CD4-positive, alpha-beta memory T cell (primary cell): ENCODE measurements at regions of chr14 and their contacts with region 1.

Region 1: GRCh38 chr14:61321385-61322010 is at the start of gene PRKCH:
- DNase-seq: peak; percentile 84 to 91 (median 85)
- H3K4me3 ChIP-seq: peak within 1 kb of the TSS; percentile 85 to 95
- H3K4me3 Mint-ChIP-seq: peak within 1 kb of the TSS; percentile 98 to 100 (median 99)
- H3K27ac ChIP-seq: peak within 1 kb of the TSS; percentile 89
- H3K27ac Mint-ChIP-seq: peak within 1 kb of the TSS in 6 of 7 donors; percentile 94 to 99 (median 97)
- H3K4me1 ChIP-seq: peaks cover 26% of the 10 kb centered on the region
- H3K4me1 Mint-ChIP-seq: peaks cover 17 to 40% (median 22%) of the 10 kb centered on the region in 4 donors
- H3K27me3 ChIP-seq: no peaks in the 10 kb centered on the region
- H3K27me3 Mint-ChIP-seq: no peaks in the 10 kb centered on the region
- total RNA-seq, gene PRKCH: 247 to 284 TPM

Region 2: DNA sequence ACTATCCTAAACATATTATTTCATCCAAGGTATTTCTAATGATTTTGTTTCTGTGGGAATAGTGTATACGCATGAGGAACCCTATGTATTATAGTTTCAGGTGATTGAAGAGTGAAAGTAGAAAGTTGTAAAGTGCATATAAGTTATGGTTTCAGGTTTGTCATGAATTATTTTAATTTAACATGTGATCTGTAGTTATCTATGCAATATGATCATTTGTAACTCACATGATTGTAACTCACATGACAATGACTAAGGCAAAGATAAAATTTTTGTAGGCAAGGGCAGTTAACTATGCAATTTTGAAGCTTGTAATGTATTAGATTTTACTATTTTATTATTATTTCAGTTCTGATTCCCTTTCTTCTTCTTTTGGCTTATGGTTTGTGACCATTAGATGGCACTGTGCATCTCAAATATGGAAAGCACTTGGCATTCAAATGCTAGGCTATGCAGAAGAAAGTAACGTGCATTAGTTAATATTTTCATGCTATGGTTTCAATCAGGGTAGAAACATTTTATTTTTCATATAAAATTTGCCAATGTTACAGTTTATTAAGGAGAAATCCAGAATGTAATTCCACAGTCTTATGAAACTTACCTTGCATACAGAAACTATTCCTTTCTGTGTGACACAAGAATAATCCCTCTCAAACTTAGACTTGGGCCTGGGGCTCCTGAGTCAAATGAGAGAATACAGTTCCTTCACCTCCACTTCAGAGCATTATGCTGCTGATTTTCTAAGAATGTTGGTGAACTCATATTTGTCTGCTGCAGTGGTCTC is 24.6 kb before region 1 on chr14:
- CTCF ChIA-PET with region 1: interaction called, 5 read pairs
- POLR2A ChIA-PET with region 1: interaction called, 3 read pairs
- intact Hi-C with region 1: loop called (anchors 2 kb)
- DNase-seq: peak; percentile 41 to 67 (median 59)
- H3K4me3 ChIP-seq: no peak overlapping the region
- H3K4me3 Mint-ChIP-seq: no peak overlapping the region
- H3K27ac ChIP-seq: no peak overlapping the region
- H3K27ac Mint-ChIP-seq: peak overlapping the region in 2 of 7 donors; percentile 43 to 79
- H3K4me1 ChIP-seq: peaks cover 21% of the 10 kb centered on the region
- H3K4me1 Mint-ChIP-seq: peaks cover 27 to 47% (median 38%) of the 10 kb centered on the region in 4 donors
- H3K27me3 ChIP-seq: no peaks in the 10 kb centered on the region
- H3K27me3 Mint-ChIP-seq: no peaks in the 10 kb centered on the region

Region 3: GRCh38 chr14:61342486-61342885 is 21.0 kb after region 1 on chr14:
- CTCF ChIA-PET with region 1: interaction called, 84 read pairs
- POLR2A ChIA-PET with region 1: interaction called, 578 read pairs
- intact Hi-C with region 1: loop called (anchors 1 kb)
- DNase-seq: peak; percentile 87 to 95 (median 88)
- H3K4me3 ChIP-seq: peak overlapping the region; percentile 25 to 42
- H3K4me3 Mint-ChIP-seq: peak overlapping the region; percentile 72 to 92 (median 82)
- H3K27ac ChIP-seq: peak overlapping the region; percentile 78
- H3K27ac Mint-ChIP-seq: peak overlapping the region; percentile 93 to 98 (median 98)
- H3K4me1 ChIP-seq: peaks cover 97% of the 10 kb centered on the region
- H3K4me1 Mint-ChIP-seq: peaks cover 82 to 95% (median 88%) of the 10 kb centered on the region in 4 donors
- H3K27me3 ChIP-seq: no peaks in the 10 kb centered on the region
- H3K27me3 Mint-ChIP-seq: no peaks in the 10 kb centered on the region

Region 4: DNA sequence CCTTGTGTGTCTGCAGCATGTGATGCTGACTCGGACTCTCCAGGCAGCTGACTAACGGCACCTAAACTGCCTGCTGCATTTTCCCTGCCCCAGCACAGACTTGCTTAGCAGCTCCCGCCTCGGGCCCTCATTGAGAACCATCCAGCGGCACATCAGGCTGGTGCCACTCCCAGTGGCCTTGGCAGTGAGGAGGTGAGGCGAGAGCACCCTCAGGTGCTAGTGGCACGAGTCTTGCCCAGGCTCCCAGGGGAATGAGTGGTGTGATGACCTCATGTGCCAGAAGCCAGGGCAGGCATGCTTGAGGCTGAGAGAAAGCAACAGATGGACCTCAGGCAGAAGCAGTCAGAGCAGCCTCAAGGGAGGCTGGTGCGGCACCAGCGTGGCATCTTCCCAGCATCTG is 60.0 kb after region 1 on chr14:
- CTCF ChIA-PET with region 1: interaction called, 18 read pairs
- POLR2A ChIA-PET with region 1: interaction called, 84 read pairs
- intact Hi-C with region 1: loop called (anchors 2 kb)
- DNase-seq: no peak
- H3K4me3 ChIP-seq: no peak overlapping the region
- H3K4me3 Mint-ChIP-seq: peak overlapping the region in 7 of 8 donors; percentile 23 to 87 (median 68)
- H3K27ac ChIP-seq: peak overlapping the region; percentile 27
- H3K27ac Mint-ChIP-seq: peak overlapping the region in 5 of 7 donors; percentile 77 to 93 (median 88)
- H3K4me1 ChIP-seq: peaks cover 100% of the 10 kb centered on the region
- H3K4me1 Mint-ChIP-seq: peaks cover 0 to 66% (median 29%) of the 10 kb centered on the region in 4 donors
- H3K27me3 ChIP-seq: no peaks in the 10 kb centered on the region
- H3K27me3 Mint-ChIP-seq: no peaks in the 10 kb centered on the region

Region 5: GRCh38 chr14:61395115-61395725 is 73.7 kb after region 1 on chr14:
- CTCF ChIA-PET with region 1: interaction called, 5 read pairs
- POLR2A ChIA-PET with region 1: interaction called, 84 read pairs
- intact Hi-C with region 1: loop called (anchors 5 kb)
- DNase-seq: no peak
- H3K4me3 ChIP-seq: no peak overlapping the region
- H3K4me3 Mint-ChIP-seq: peak overlapping the region in 6 of 8 donors; percentile 21 to 61 (median 32)
- H3K27ac ChIP-seq: no peak overlapping the region
- H3K27ac Mint-ChIP-seq: peak overlapping the region in 6 of 7 donors; percentile 38 to 86 (median 57)
- H3K4me1 ChIP-seq: peaks cover 100% of the 10 kb centered on the region
- H3K4me1 Mint-ChIP-seq: peaks cover 42 to 77% (median 59%) of the 10 kb centered on the region in 4 donors
- H3K27me3 ChIP-seq: no peaks in the 10 kb centered on the region
- H3K27me3 Mint-ChIP-seq: no peaks in the 10 kb centered on the region

Region 6: DNA sequence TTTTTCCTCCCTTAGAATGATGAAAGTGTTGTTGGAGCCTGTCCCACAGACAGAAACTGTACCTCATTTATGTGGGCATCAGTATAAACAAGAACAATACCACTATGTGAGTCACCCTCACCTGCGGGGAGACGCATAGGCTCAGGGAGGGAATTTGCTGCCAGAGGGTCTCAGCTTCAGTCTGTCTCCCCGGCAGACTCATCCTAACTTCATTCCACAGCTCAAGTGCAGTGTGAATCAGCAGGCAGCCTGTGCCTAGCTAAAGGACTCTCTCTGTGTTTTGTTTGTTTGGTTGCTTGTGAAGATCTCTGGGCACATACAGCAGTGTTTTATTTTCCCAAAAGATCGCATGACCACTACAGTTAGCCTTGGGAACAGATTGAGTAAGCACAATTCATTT is 98.8 kb after region 1 on chr14:
- CTCF ChIA-PET with region 1: interaction called, 9 read pairs
- POLR2A ChIA-PET with region 1: interaction called, 13 read pairs
- intact Hi-C with region 1: no loop called
- DNase-seq: peak in 1 of 5 donors; percentile 65
- H3K4me3 ChIP-seq: no peak overlapping the region
- H3K4me3 Mint-ChIP-seq: peak overlapping the region in 7 of 8 donors; percentile 25 to 74 (median 45)
- H3K27ac ChIP-seq: no peak overlapping the region
- H3K27ac Mint-ChIP-seq: peak overlapping the region in 6 of 7 donors; percentile 54 to 82 (median 71)
- H3K4me1 ChIP-seq: peaks cover 100% of the 10 kb centered on the region
- H3K4me1 Mint-ChIP-seq: peaks cover 5 to 82% (median 42%) of the 10 kb centered on the region in 4 donors
- H3K27me3 ChIP-seq: no peaks in the 10 kb centered on the region
- H3K27me3 Mint-ChIP-seq: no peaks in the 10 kb centered on the region

Region 7: DNA sequence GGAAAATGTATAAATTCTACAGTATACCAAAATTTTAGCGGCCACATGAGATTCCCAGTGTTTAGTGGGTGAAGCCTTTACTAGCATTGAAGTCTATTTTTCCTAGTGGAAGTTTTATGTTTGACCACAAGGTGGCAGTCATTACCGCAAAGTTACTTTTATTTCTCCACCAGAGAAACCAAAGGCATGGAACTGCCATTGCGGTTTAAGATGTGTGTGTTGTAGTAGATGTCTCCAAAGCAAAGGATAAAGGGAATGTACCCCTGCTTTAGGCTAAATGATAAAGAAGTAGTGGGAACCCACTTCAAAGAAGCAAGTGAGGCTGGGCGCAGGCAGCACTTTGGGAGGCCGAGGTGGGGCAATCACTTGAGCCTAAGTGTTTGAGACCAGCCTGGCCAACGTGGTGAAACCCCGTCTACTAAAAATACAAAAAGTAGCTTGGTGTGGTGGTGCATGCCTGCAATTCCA is 140.3 kb after region 1 on chr14:
- CTCF ChIA-PET with region 1: interaction called, 3 read pairs
- POLR2A ChIA-PET with region 1: interaction called, 14 read pairs
- intact Hi-C with region 1: no loop called
- DNase-seq: peak; percentile 58 to 71 (median 69)
- H3K4me3 ChIP-seq: no peak overlapping the region
- H3K4me3 Mint-ChIP-seq: peak overlapping the region in 5 of 8 donors; percentile 21 to 51 (median 47)
- H3K27ac ChIP-seq: peak overlapping the region; percentile 22
- H3K27ac Mint-ChIP-seq: peak overlapping the region; percentile 88 to 97 (median 92)
- H3K4me1 ChIP-seq: peaks cover 46% of the 10 kb centered on the region
- H3K4me1 Mint-ChIP-seq: peaks cover 47 to 77% (median 60%) of the 10 kb centered on the region in 4 donors
- H3K27me3 ChIP-seq: no peaks in the 10 kb centered on the region
- H3K27me3 Mint-ChIP-seq: no peaks in the 10 kb centered on the region

Region 8: GRCh38 chr14:61653507-61653906 is 332.0 kb after region 1 on chr14:
- CTCF ChIA-PET with region 1: no interaction called
- POLR2A ChIA-PET with region 1: no interaction called
- intact Hi-C with region 1: no loop called
- DNase-seq: no peak
- H3K4me3 ChIP-seq: no peak overlapping the region
- H3K4me3 Mint-ChIP-seq: no peak overlapping the region
- H3K27ac ChIP-seq: no peak overlapping the region
- H3K27ac Mint-ChIP-seq: no peak overlapping the region
- H3K4me1 ChIP-seq: peaks cover 26% of the 10 kb centered on the region
- H3K4me1 Mint-ChIP-seq: peaks cover 27 to 55% (median 36%) of the 10 kb centered on the region in 4 donors
- H3K27me3 ChIP-seq: no peaks in the 10 kb centered on the region
- H3K27me3 Mint-ChIP-seq: no peaks in the 10 kb centered on the region